PC-9 (cell line): ENCODE measurements at regions of chrX and their contacts with region 1.

Region 1: DNA sequence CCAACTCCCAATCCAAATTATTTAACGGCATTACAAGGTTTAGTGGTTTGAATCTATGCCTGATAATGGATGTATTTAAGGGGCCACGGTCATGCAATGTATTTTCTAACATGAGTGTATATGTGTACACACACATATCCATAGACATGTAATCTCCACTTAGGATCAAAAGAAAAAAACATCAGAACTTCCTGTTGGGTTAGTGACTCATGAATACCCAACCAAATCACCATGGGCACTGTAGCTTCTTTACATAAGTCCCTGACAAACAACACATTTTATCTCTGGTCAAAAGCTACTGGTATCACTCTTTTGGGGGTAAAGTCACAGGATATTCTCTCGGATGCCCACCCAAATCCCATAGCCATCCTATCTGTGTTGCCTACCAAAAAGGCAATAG is 36.5 kb upstream of the TFDP3 start:
- DNase-seq: peak in 1 of 2 experiments; percentile 70
- H3K4me3 ChIP-seq: no peak overlapping the region
- H3K27ac ChIP-seq: no peak overlapping the region
- H3K4me1 ChIP-seq: peaks cover 11% of the 10 kb centered on the region; the same call in 1 of the 2 replicates
- H3K27me3 ChIP-seq: no peaks in the 10 kb centered on the region
- CTCF ChIP-seq: no peak

Region 2: DNA sequence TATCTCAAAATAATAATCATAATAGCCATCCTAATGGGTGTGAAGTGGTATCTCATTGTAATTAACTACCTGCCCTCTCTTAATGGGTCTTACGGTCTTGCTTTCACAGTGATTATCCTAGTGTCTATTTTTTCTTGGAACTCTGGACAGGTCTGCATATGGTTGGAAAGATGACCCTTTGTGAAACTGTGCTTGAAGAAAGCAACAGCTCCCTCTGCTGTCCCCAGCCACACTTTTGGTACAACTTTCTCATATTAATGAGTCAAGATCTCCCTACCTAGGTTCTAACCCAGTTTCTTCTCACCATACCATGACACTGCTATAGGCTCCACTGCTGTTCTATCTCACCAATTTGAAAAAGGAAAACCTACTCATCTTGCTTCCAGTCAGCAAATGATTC is 38.9 kb before region 1 on chrX:
- CTCF ChIA-PET with region 1: no interaction called
- POLR2A ChIA-PET with region 1: no interaction called
- intact Hi-C with region 1: no loop called
- DNase-seq: peak in 1 of 2 experiments; percentile 27
- H3K4me3 ChIP-seq: no peak overlapping the region
- H3K27ac ChIP-seq: no peak overlapping the region
- H3K4me1 ChIP-seq: no peaks in the 10 kb centered on the region
- H3K27me3 ChIP-seq: no peaks in the 10 kb centered on the region
- CTCF ChIP-seq: peak; percentile 64

Region 3: DNA sequence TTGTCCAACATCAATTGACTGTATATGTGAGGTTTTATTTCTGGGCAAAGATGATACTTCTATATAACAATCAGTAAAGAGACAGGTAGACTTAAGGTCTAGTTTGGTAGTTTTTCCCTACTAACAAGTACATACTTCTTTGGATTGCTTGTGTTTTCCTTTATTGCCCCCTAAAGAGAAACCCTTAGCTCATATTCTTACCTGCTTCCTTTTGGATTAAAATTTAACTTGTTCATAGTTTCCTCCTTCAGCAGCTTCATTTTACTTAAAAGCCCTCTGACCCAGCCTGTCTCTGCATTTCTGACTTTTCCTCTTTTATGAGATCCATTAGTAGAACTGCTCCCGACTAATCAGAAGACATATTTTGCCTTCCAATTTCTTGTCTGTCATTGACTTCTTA is 236.3 kb after region 1 on chrX:
- CTCF ChIA-PET with region 1: no interaction called
- POLR2A ChIA-PET with region 1: no interaction called
- intact Hi-C with region 1: no loop called
- DNase-seq: no peak
- H3K4me3 ChIP-seq: no peak overlapping the region
- H3K27ac ChIP-seq: no peak overlapping the region
- H3K4me1 ChIP-seq: no peaks in the 10 kb centered on the region
- H3K27me3 ChIP-seq: no peaks in the 10 kb centered on the region
- CTCF ChIP-seq: no peak

Region 4: GRCh38 chrX:133726211-133726641 is 471.6 kb after region 1 on chrX:
- CTCF ChIA-PET with region 1: no interaction called
- POLR2A ChIA-PET with region 1: no interaction called
- intact Hi-C with region 1: loop called (anchors 5 kb)
- DNase-seq: peak; percentile 54 to 98
- H3K4me3 ChIP-seq: peak overlapping the region; percentile 36; the same call in 1 of the 2 replicates
- H3K27ac ChIP-seq: peak overlapping the region; percentile 90
- H3K4me1 ChIP-seq: peaks cover 20% of the 10 kb centered on the region
- H3K27me3 ChIP-seq: no peaks in the 10 kb centered on the region
- CTCF ChIP-seq: no peak